ENCODE measurements at regions of chr18 and their contacts with region 1.

Region 1: DNA sequence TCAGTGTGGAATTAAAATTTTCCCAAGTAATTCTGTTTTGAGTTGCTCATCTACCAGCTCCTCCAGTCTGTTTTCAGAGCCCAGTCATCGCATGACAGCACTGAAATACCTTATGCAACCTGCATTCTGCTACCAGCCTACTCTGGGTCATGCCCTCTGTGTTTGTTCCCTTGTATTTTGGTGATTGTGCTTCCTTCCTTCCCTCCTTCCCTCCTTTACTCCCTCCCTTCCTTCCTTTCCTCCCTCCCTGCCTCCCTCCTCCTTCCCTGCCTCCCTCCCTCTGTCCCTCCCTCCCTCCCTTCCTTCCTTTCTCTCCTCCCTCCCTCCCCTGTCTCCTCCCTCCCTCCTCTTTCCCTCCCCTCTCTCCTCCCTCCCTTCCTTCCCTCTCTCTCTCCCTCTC is 289.6 kb downstream of the CDH2 start:
- DNase-seq: no peak
- ATAC-seq: no peak
- H3K4me3 ChIP-seq: no peak overlapping the region
- H3K27ac ChIP-seq: no peak overlapping the region
- H3K4me1 ChIP-seq: peaks cover 2% of the 10 kb centered on the region; the same call in 1 of the 2 replicates
- H3K27me3 ChIP-seq: no peaks in the 10 kb centered on the region
- CTCF ChIP-seq: no peak
- POLR2A ChIP-seq: no peak
- RAD21 ChIP-seq: no peak

Region 2: DNA sequence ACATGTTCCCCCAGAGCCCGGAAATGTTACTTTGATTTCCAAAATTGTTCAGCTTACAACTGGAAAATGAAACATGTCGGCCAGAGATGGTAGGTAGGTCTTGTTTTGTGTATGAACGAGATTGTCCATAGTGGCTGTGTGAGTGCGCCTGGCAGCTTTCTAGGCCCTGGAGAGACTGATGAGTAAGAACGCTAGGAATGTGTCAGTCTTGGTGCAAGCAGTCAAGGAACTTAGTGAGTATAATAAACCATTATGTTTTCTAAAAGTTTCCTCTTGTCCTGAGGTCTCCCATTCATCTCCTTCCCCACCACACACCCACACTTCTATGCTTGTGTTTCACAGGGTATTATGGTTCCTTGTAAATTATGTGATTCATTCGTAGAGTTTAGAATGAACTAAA is 55.4 kb after region 1 on chr18:
- CTCF ChIA-PET with region 1: no interaction called
- POLR2A ChIA-PET with region 1: no interaction called
- dilution Hi-C with region 1: no loop called
- in situ Hi-C with region 1: no loop called
- intact Hi-C with region 1: loop called (anchors 2 kb)
- DNase-seq: peak; percentile 34
- ATAC-seq: peak; percentile 44
- H3K4me3 ChIP-seq: no peak overlapping the region
- H3K27ac ChIP-seq: no peak overlapping the region
- H3K4me1 ChIP-seq: no peaks in the 10 kb centered on the region
- H3K27me3 ChIP-seq: no peaks in the 10 kb centered on the region
- CTCF ChIP-seq: no peak
- POLR2A ChIP-seq: no peak
- RAD21 ChIP-seq: no peak